Dorsolateral prefrontal cortex (tissue), 120 donors: ENCODE measurements at regions of chr21 and their contacts with region 1.

Region 1: DNA sequence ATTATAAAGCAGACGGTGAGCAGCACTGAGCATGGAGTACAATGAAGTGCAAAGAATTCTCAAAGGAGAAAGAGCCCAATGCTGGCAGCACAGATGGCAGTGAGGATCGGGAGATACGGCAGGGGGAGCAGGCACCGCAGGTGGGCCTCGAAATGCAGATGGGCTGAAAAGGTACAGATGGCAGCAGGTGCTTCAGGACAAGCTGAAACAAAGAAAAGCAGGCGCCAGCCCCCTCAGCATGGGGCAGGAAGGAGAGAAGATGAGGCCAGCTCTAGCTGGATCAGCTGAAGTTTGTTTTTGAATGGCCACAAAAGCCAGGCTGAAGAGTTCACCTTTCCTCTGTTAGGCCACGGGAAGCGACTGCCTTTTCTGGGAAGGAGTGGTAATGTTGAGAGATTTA is 7.7 kb downstream of the CFAP298 start:
- DNase-seq: peak in 1 of 10 donors; percentile 83
- H3K4me3 ChIP-seq: no peak overlapping the region
- H3K27ac ChIP-seq: peak overlapping the region in 26 of 59 donors; percentile 0 to 81 (median 20)
- H3K27me3 ChIP-seq: no peaks in the 10 kb centered on the region
- CTCF ChIP-seq: no peak

Region 2: GRCh38 chr21:31781737-31782136 is 822.7 kb before region 1 on chr21:
- intact Hi-C with region 1: loop called in 1 of 2 experiments (anchors 10 kb)
- DNase-seq: peak in 2 of 10 donors; percentile 21 to 49
- H3K4me3 ChIP-seq: no peak overlapping the region
- H3K27ac ChIP-seq: no peak overlapping the region
- H3K27me3 ChIP-seq: no peaks in the 10 kb centered on the region
- CTCF ChIP-seq: no peak

Region 3: GRCh38 chr21:31866077-31866511 is 738.4 kb before region 1 on chr21:
- intact Hi-C with region 1: loop called in 1 of 2 experiments (anchors 5 kb)
- DNase-seq: peak; percentile 87 to 94 (median 91)
- H3K4me3 ChIP-seq: peak overlapping the region in 36 of 59 donors; percentile 0 to 45 (median 28)
- H3K27ac ChIP-seq: peak overlapping the region in 21 of 59 donors; percentile 5 to 65 (median 32)
- H3K27me3 ChIP-seq: no peaks in the 10 kb centered on the region
- CTCF ChIP-seq: peak; percentile 80 to 99 (median 95)

Region 4: DNA sequence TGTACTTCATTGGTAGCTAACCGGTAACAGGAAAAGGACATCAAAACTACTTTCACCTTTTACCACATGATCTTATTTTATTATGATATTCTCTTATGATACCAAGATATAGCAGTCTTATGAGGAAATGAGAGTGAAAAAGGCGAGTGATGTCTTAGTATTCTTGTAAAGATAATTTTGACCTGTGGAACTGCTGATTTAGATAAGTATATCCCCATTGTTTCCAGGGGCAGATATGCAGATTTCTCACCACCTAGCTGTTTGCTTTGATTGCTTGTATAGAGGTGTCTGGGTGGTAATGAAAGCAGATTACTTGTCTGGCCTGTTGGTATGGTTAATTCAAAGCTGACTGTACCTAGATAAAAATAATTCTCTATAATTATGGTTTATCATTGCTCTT is 70.3 kb after region 1 on chr21:
- intact Hi-C with region 1: no loop called
- DNase-seq: no peak
- H3K4me3 ChIP-seq: no peak overlapping the region
- H3K27ac ChIP-seq: no peak overlapping the region
- H3K27me3 ChIP-seq: no peaks in the 10 kb centered on the region
- CTCF ChIP-seq: no peak